GM18951 (cell line): ENCODE measurements at regions of chr18 and their contacts with region 1.

Region 1: DNA sequence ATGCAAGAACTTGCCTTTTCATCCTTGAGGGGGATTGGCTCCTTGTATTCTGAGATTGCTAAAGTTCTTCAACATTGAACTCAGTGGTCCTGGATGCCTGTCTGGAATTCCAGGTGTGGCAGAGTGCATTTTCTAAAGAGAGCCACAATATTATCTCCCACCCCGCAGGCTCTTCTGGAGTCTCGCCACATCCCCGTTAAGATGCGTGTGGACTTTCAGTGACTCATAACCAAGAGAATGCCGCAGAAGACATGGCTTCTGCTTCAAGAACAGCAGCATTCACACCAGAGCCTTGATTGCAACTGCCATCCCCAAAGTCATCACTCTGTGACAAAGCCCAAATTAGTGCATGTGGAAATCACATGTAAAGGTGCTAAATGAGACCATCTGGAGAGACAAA is 142.7 kb downstream of the CDH20 start:
- POLR2A ChIP-seq: no peak

Region 2: GRCh38 chr18:61085761-61086160 is 390.2 kb before region 1 on chr18:
- in situ Hi-C with region 1: loop called (anchors 25 kb)
- POLR2A ChIP-seq: no peak